Mammary epithelial cell (primary cell): ENCODE measurements at regions of chr6 and their contacts with region 1.

Region 1: GRCh38 chr6:109024784-109025183 is 69.9 kb downstream of the SESN1 start:
- DNase-seq: no peak
- H3K4me3 ChIP-seq: no peak overlapping the region
- H3K27ac ChIP-seq: no peak overlapping the region
- H3K4me1 ChIP-seq: no peaks in the 10 kb centered on the region
- H3K27me3 ChIP-seq: no peaks in the 10 kb centered on the region
- CTCF ChIP-seq: no peak

Region 2: GRCh38 chr6:108635505-108636226 is 389.1 kb before region 1 on chr6:
- CTCF ChIA-PET with region 1: no interaction called
- dilution Hi-C with region 1: no loop called
- in situ Hi-C with region 1: no loop called
- intact Hi-C with region 1: loop called (anchors 5 kb)
- DNase-seq: peak; percentile 33
- H3K4me3 ChIP-seq: no peak overlapping the region
- H3K27ac ChIP-seq: no peak overlapping the region
- H3K4me1 ChIP-seq: peaks cover 4% of the 10 kb centered on the region
- H3K27me3 ChIP-seq: no peaks in the 10 kb centered on the region
- CTCF ChIP-seq: no peak